Keratinocyte (primary cell): ENCODE measurements at regions of chr7 and their contacts with region 1.

Region 1: DNA sequence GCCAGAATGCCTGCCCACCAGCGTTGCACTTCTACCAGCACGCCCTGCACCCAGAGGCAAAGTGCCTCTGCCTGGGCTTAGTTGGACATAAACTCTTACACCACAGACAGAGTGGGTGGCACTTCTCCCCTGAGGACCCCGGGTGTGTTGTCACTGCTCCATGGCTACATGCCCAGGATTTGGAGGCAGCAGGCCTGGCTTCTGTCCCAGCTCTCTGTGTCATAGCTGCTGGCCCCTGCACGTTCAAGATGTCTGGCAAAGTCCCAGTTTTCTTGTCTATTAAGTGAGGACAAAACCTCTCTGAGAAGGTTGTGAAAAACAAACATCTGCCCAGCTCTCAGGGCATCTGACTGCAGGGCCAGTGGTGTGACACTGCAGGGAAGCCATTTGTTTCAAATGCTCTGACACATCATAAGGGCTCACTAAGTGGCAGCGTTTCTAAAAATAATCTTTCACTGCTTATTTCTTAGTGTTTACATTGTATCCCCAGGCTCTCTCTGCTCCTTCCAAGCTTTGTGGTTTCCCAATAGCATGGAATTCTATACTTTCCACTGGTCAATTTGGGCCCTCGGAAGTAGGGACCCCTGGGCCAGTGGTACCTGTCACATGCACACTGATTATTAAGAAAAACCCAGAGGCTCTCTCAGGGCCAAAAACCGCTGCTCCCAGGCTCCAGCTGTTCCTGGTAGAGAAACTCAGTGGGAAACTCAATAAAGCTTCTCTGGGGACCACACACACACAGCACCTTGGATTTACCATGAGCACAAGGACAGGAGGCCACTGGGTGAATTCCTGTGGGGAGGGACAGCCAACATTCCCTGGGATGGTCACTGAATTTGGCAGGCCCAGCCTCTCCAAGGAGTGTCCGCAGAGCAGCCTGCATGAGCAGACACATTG is 86.2 kb upstream of the ANLN start:
- DNase-seq: no peak
- H3K4me3 ChIP-seq: no peak overlapping the region
- H3K27ac ChIP-seq: no peak overlapping the region
- H3K4me1 ChIP-seq: peaks cover 13% of the 10 kb centered on the region
- H3K27me3 ChIP-seq: no peaks in the 10 kb centered on the region
- CTCF ChIP-seq: no peak

Region 2: DNA sequence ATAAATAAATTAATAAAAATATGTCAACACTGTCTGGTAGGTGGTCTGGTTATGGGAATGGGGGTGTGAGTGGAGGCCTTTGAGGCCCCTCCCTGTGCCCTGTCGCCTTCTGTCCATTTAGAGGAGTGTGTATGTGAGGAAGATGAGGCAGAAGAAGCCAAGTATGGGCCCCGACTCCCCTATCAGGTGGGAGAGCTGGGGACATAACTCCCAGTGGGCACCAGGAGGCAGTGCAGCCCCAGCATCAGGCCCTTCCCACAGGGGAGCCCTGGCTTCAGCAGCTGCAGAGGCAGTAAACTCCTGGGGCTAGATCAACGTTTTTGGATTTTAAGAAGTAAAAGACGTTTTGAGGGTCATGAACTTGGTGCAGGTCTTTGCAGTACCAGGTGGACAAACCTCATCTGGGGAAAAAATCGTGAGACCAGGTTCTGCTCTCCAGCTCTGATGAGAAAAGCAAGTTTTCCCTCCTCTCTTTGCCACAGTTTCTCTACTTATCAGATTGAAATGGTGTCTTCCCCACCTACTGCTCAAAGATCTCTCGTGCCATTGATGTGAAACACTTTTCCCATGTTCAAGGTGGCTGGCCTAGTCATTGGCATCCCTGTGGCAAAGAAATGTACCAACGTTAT is 318.2 kb before region 1 on chr7:
- dilution Hi-C with region 1: loop called (anchors 25 kb)
- DNase-seq: no peak
- H3K4me3 ChIP-seq: no peak overlapping the region
- H3K27ac ChIP-seq: no peak overlapping the region
- H3K4me1 ChIP-seq: no peaks in the 10 kb centered on the region
- H3K27me3 ChIP-seq: no peaks in the 10 kb centered on the region
- CTCF ChIP-seq: peak; percentile 94 to 97 (median 96)

Region 3: GRCh38 chr7:36406156-36406555 is 102.7 kb after region 1 on chr7:
- dilution Hi-C with region 1: no loop called
- DNase-seq: no peak
- H3K4me3 ChIP-seq: no peak overlapping the region
- H3K27ac ChIP-seq: no peak overlapping the region
- H3K4me1 ChIP-seq: no peaks in the 10 kb centered on the region
- H3K27me3 ChIP-seq: no peaks in the 10 kb centered on the region
- CTCF ChIP-seq: no peak